Activated CD4-positive, alpha-beta memory T cell treated with anti-CD3 and anti-CD28 coated beads for 36 hours (primary cell): ENCODE measurements at regions of chr7 and their contacts with region 1.

Region 1: GRCh38 chr7:130486114-130486958 is 5.5 kb upstream of the MEST start:
- DNase-seq: peak; percentile 65
- H3K4me3 Mint-ChIP-seq: peak overlapping the region; percentile 63
- H3K27ac Mint-ChIP-seq: no peak overlapping the region
- H3K4me1 Mint-ChIP-seq: peaks cover 17% of the 10 kb centered on the region
- H3K27me3 Mint-ChIP-seq: peaks cover 56% of the 10 kb centered on the region

Region 2: GRCh38 chr7:130529417-130529816 is 43.1 kb after region 1 on chr7:
- CTCF ChIA-PET with region 1: no interaction called
- POLR2A ChIA-PET with region 1: no interaction called
- intact Hi-C with region 1: no loop called
- DNase-seq: no peak
- H3K4me3 Mint-ChIP-seq: no peak overlapping the region
- H3K27ac Mint-ChIP-seq: no peak overlapping the region
- H3K4me1 Mint-ChIP-seq: peaks cover 6% of the 10 kb centered on the region
- H3K27me3 Mint-ChIP-seq: no peaks in the 10 kb centered on the region

Region 3: GRCh38 chr7:130733931-130734814 is 247.8 kb after region 1 on chr7 and contains the start of gene KLF14:
- CTCF ChIA-PET with region 1: interaction called, 5 read pairs
- POLR2A ChIA-PET with region 1: no interaction called
- intact Hi-C with region 1: loop called (anchors 10 kb)
- DNase-seq: peak; percentile 39
- H3K4me3 Mint-ChIP-seq: peak within 1 kb of the TSS; percentile 72
- H3K27ac Mint-ChIP-seq: no peak within 1 kb of the TSS
- H3K4me1 Mint-ChIP-seq: peaks cover 10% of the 10 kb centered on the region
- H3K27me3 Mint-ChIP-seq: peaks cover 63% of the 10 kb centered on the region
- total RNA-seq, gene KLF14: not detected